ENCODE measurements at regions of chr2 and their contacts with region 1.

Region 1: GRCh38 chr2:191811807-191812602 is 34.9 kb downstream of the CAVIN2 start:
- DNase-seq: peak; percentile 36 to 65
- ATAC-seq: peak; percentile 64 to 95 (median 86)
- H3K4me3 ChIP-seq: peak overlapping the region in 5 of 10 donors; percentile 14 to 35 (median 31)
- H3K27ac ChIP-seq: no peak overlapping the region
- H3K4me1 ChIP-seq: peaks cover 0 to 10% (median 0%) of the 10 kb centered on the region in 9 donors
- H3K27me3 ChIP-seq: no peaks in the 10 kb centered on the region
- CTCF ChIP-seq: peak; percentile 74 to 94 (median 81)

Region 2: GRCh38 chr2:190023861-190024260 is 1788.1 kb before region 1 on chr2:
- intact Hi-C with region 1: no loop called
- DNase-seq: no peak
- ATAC-seq: no peak
- H3K4me3 ChIP-seq: no peak overlapping the region
- H3K27ac ChIP-seq: no peak overlapping the region
- H3K4me1 ChIP-seq: no peaks in the 10 kb centered on the region
- H3K27me3 ChIP-seq: peaks cover 0 to 9% (median 0%) of the 10 kb centered on the region in 7 donors
- CTCF ChIP-seq: peak in 8 of 9 donors; percentile 24 to 60 (median 39)

Region 3: GRCh38 chr2:191566344-191566743 is 245.7 kb before region 1 on chr2:
- intact Hi-C with region 1: loop called in 1 of 10 experiments (anchors 10 kb)
- DNase-seq: peak in 1 of 2 donors; percentile 47
- ATAC-seq: peak in 6 of 8 donors; percentile 52 to 75 (median 62)
- H3K4me3 ChIP-seq: no peak overlapping the region
- H3K27ac ChIP-seq: no peak overlapping the region
- H3K4me1 ChIP-seq: peaks cover 0 to 23% (median 0%) of the 10 kb centered on the region in 9 donors
- H3K27me3 ChIP-seq: peaks cover 0 to 32% (median 14%) of the 10 kb centered on the region in 7 donors
- CTCF ChIP-seq: peak; percentile 32 to 81 (median 74)

Region 4: DNA sequence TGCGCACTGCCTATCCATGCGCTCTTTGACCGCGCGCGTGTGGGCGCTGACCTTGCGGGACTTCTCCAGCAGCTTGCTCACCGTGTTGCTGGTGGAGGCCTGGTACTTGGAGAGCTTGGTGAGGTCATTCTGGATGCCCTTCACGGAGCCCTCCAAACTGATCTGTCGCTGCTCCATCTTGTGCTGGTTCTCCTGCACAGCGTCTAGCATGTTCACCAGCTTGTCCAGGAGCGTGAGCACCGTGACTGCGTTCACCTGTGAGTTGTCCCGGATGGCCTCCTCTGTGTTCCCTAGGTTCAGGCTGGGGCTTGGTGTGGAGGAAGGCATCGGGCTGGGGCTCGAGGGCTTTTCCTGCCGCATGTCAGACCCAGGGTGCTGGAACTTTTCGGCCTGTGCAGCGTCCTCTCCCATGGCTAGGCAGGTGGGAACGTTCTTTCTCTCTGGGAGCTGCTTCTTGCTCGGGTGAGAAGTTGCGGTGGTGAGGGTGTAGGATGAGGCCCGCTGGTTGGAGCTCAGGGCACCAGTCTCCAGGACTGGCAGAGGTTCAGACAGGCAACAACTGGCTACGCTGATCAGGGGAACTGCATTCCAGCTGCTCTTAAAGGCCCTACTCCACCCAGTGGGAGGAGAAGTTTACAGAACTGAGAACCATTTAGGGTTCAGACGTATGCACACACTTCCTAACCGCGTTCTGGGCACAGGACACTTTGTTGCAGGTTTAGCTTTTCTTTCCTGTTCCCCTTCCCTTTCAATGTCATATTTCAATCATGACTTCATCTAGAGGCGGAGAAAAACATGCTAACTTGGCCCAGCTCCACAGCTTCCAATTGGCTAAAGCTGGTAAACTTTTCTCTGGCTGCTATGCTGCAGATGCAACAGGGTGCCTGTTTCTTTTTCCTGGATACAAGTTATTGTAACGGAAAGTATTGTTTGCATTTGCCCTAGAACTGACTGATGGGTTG is 34.8 kb after region 1 on chr2 and contains the start of gene CAVIN2:
- intact Hi-C with region 1: loop called in 1 of 10 experiments (anchors 1 kb)
- DNase-seq: peak; percentile 50 to 88
- ATAC-seq: peak; percentile 79 to 92 (median 88)
- H3K4me3 ChIP-seq: peak within 1 kb of the TSS; percentile 62 to 81 (median 76)
- H3K27ac ChIP-seq: peak within 1 kb of the TSS; percentile 87 to 97 (median 94)
- H3K4me1 ChIP-seq: peaks cover 10 to 57% (median 42%) of the 10 kb centered on the region in 9 donors
- H3K27me3 ChIP-seq: no peaks in the 10 kb centered on the region
- CTCF ChIP-seq: peak in 3 of 9 donors; percentile 16 to 23 (median 17)
- total RNA-seq, gene CAVIN2: 73.5 to 126 (median 101) TPM

Region 5: GRCh38 chr2:191933307-191934105 is 121.5 kb after region 1 on chr2:
- intact Hi-C with region 1: no loop called
- DNase-seq: no peak
- ATAC-seq: no peak
- H3K4me3 ChIP-seq: no peak overlapping the region
- H3K27ac ChIP-seq: no peak overlapping the region
- H3K4me1 ChIP-seq: peaks cover 0 to 31% (median 5%) of the 10 kb centered on the region in 9 donors
- H3K27me3 ChIP-seq: no peaks in the 10 kb centered on the region
- CTCF ChIP-seq: no peak

Region 6: GRCh38 chr2:192162392-192163042 is 350.5 kb after region 1 on chr2:
- intact Hi-C with region 1: loop called (anchors 1 to 5 kb)
- DNase-seq: peak in 1 of 2 donors; percentile 79
- ATAC-seq: peak in 7 of 8 donors; percentile 77 to 90 (median 86)
- H3K4me3 ChIP-seq: peak overlapping the region in 5 of 10 donors; percentile 11 to 34 (median 22)
- H3K27ac ChIP-seq: peak overlapping the region in 1 of 10 donors; percentile 11
- H3K4me1 ChIP-seq: peaks cover 0 to 11% (median 6%) of the 10 kb centered on the region in 9 donors
- H3K27me3 ChIP-seq: peaks cover 0 to 5% (median 0%) of the 10 kb centered on the region in 7 donors
- CTCF ChIP-seq: peak; percentile 81 to 98 (median 92)